CD14-positive monocyte (primary cell): ENCODE measurements at regions of chr1 and their contacts with region 1.

Region 1: DNA sequence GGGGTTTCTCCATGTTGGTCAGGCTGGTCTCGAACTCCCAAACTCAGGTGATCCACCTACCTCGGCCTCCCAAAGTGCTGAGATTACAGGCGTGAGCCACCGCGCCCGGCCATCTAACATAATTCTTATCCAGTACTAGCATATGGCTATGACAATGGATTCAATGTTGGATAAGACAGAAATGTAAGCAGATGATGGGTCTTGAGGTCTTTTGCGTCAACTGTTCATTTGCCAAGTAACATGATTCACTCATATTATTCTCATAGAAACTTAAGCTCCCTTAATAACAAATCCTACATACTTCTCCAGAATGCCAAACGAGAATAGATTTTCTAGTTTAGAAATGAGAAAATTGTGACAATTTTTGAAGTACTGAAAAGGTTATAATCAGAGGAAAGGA is 170.3 kb downstream of the RGS7 start:
- DNase-seq: no peak
- H3K4me3 ChIP-seq: no peak overlapping the region
- H3K4me3 Mint-ChIP-seq: no peak overlapping the region
- H3K27ac ChIP-seq: no peak overlapping the region
- H3K27ac Mint-ChIP-seq: no peak overlapping the region
- H3K4me1 ChIP-seq: no peaks in the 10 kb centered on the region
- H3K4me1 Mint-ChIP-seq: no peaks in the 10 kb centered on the region
- H3K27me3 ChIP-seq: no peaks in the 10 kb centered on the region
- H3K27me3 Mint-ChIP-seq: peaks cover 0 to 1% (median 0%) of the 10 kb centered on the region in 3 donors
- CTCF ChIP-seq: no peak

Region 2: DNA sequence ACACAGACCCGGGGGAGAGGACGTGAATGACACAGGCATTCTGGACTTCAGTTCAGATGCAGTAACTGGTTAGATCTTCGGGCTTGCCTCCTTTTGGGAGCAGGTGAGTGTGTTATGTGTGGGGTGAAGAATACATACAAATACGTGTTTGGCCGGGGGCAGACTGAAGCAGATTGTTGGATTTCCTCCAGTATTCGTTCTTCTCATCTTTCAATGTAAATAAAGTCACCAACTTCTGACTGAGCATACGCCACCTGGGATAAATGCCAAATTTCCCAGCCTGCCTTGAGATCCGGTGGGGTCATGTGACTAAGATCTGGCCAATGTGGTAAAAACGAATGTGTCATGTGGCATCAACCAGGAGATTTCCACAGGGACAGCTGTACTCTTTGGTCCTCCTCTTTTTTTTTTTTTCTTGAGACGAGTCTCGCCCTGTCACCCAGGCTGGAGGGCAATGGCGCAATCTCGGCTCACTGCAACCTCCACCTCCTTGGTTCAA is 19.5 kb before region 1 on chr1:
- intact Hi-C with region 1: loop called in 1 of 2 experiments (anchors 2 kb)
- DNase-seq: no peak
- H3K4me3 ChIP-seq: no peak overlapping the region
- H3K4me3 Mint-ChIP-seq: no peak overlapping the region
- H3K27ac ChIP-seq: no peak overlapping the region
- H3K27ac Mint-ChIP-seq: no peak overlapping the region
- H3K4me1 ChIP-seq: no peaks in the 10 kb centered on the region
- H3K4me1 Mint-ChIP-seq: no peaks in the 10 kb centered on the region
- H3K27me3 ChIP-seq: no peaks in the 10 kb centered on the region
- H3K27me3 Mint-ChIP-seq: peaks cover 0 to 1% (median 0%) of the 10 kb centered on the region in 3 donors
- CTCF ChIP-seq: no peak

Region 3: DNA sequence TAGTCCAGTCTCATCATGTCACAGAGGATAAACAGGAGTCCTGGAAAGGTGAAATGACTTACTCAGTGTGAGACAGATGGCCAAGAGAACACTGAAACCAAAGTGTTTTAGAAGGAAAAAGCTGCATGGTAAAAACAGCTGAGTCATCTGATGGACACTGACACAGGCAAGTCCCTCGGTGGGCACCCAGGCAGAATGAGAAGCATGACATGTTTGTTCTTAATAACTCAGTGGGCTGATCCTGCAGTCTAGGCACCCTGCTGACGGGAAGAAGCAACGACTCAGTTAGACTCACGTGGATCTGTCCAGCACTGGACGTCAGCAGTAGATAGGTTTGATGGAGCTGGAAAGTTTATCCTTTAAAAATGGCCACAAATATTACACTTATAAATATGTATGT is 53.4 kb after region 1 on chr1:
- intact Hi-C with region 1: no loop called
- DNase-seq: no peak
- H3K4me3 ChIP-seq: no peak overlapping the region
- H3K4me3 Mint-ChIP-seq: no peak overlapping the region
- H3K27ac ChIP-seq: no peak overlapping the region
- H3K27ac Mint-ChIP-seq: peak overlapping the region in 1 of 7 donors; percentile 76
- H3K4me1 ChIP-seq: no peaks in the 10 kb centered on the region
- H3K4me1 Mint-ChIP-seq: no peaks in the 10 kb centered on the region
- H3K27me3 ChIP-seq: no peaks in the 10 kb centered on the region
- H3K27me3 Mint-ChIP-seq: no peaks in the 10 kb centered on the region
- CTCF ChIP-seq: no peak

Region 4: DNA sequence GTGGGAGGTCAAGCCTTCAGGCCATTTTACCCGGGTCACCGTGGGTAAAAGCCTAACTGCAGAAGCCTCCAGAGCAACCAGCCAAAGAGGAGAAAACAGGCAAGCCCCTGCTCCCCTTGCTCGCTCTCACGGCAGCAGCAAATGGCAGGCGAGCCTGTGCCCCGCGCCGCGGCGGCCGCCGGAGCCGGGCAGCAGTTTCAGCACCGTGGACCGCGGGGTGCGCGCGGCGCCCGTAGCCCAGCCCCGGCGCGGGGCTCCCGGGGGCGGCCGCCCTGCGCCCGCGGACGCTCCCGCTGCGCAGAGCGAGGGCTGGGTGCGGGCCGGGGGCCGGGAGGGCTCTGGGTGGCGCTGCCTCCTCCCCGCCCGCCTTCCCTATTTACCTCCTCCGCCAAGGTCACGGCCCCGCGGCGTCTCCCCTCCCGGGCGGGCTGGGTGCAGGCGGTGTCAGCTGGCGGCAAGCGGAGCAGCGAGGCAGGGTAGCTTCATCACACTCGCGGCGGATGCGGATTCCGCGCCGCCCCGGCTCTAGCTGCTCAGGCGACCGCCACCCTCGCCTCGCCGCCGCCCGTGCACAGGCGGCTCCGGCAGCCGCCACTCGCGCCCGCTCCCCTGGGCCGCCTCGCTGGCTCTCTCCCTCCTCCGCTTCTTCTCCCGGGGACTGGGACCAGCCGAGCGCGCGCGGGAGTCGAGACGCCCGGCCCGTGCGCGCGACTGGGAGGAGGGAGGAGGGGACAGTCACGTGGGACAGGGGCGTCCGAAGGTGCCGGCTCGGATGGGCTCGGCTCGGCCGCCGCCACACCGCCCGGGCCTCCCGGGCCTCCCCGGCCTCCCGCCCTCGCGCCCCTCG is 170.0 kb after region 1 on chr1 and contains the start of gene RGS7:
- intact Hi-C with region 1: no loop called
- DNase-seq: no peak
- H3K4me3 ChIP-seq: peak within 1 kb of the TSS in 1 of 3 experiments; percentile 28
- H3K4me3 Mint-ChIP-seq: peak within 1 kb of the TSS; percentile 13 to 86
- H3K27ac ChIP-seq: no peak within 1 kb of the TSS
- H3K27ac Mint-ChIP-seq: no peak within 1 kb of the TSS
- H3K4me1 ChIP-seq: no peaks in the 10 kb centered on the region
- H3K4me1 Mint-ChIP-seq: peaks cover 5% of the 10 kb centered on the region
- H3K27me3 ChIP-seq: peaks cover 34 to 42% of the 10 kb centered on the region in 2 donors
- H3K27me3 Mint-ChIP-seq: peaks cover 39 to 42% (median 41%) of the 10 kb centered on the region in 3 donors
- CTCF ChIP-seq: no peak
- polyA plus RNA-seq, gene RGS7: not detected